K562 (cell line): ENCODE measurements at regions of chr14 and their contacts with region 1.

Region 1: DNA sequence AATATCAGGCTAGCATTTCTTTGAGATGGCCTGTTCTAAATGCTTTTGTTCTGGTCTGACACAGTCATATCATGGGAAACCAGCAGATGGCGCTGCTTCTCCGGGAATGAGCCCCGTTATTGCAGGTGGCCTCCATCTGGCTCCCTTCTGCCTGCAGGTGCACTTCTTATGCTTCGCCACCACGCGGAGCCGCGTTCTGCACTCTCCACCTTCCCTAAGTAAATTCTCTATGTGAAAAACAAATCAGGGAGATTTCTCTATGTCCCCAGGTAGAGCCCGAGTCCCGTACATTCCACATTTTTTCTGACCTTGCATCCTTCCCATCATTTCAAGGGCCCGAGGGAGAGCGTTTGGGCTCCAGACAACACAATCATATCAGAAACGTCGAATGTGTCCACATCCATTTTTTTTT is 26.2 kb downstream of the GLRX5 start:
- DNase-seq: peak; percentile 74 to 85 (median 80)
- ATAC-seq: peak; percentile 98
- H3K4me3 ChIP-seq: no peak overlapping the region
- H3K27ac ChIP-seq: no peak overlapping the region
- H3K4me1 ChIP-seq: no peaks in the 10 kb centered on the region; a peak in 1 of 5 replicates
- H3K27me3 ChIP-seq: 0 out of 5 replicates have a peak, but pooled peaks cover 0 to 12% of the 10 kb centered on the region in 2 experiments
- CTCF ChIP-seq: peak; percentile 97 to 98 (median 98)
- EP300 ChIP-seq: no peak
- POLR2A ChIP-seq: no peak
- RAD21 ChIP-seq: peak; percentile 81 to 94

Region 2: GRCh38 chr14:95527387-95528002 is 33.5 kb before region 1 on chr14:
- CTCF ChIA-PET with region 1: no interaction called
- POLR2A ChIA-PET with region 1: no interaction called
- in situ Hi-C with region 1: no loop called
- intact Hi-C with region 1: no loop called
- DNase-seq: peak in 1 of 4 experiments; percentile 51
- ATAC-seq: peak; percentile 25; the same call in 1 of the 3 replicates
- H3K4me3 ChIP-seq: no peak overlapping the region
- H3K27ac ChIP-seq: 0 out of 3 replicates have a peak overlapping the region, but pooled peaks have one; percentile 47
- H3K4me1 ChIP-seq: peaks cover 0 to 64% of the 10 kb centered on the region in 2 experiments; a peak in 3 of 5 replicates
- H3K27me3 ChIP-seq: no peaks in the 10 kb centered on the region
- CTCF ChIP-seq: peak; percentile 46 to 73 (median 62); a peak in 5 of 6 replicates
- EP300 ChIP-seq: no peak
- POLR2A ChIP-seq: no peak
- RAD21 ChIP-seq: peak; percentile 45 to 69

Region 3: DNA sequence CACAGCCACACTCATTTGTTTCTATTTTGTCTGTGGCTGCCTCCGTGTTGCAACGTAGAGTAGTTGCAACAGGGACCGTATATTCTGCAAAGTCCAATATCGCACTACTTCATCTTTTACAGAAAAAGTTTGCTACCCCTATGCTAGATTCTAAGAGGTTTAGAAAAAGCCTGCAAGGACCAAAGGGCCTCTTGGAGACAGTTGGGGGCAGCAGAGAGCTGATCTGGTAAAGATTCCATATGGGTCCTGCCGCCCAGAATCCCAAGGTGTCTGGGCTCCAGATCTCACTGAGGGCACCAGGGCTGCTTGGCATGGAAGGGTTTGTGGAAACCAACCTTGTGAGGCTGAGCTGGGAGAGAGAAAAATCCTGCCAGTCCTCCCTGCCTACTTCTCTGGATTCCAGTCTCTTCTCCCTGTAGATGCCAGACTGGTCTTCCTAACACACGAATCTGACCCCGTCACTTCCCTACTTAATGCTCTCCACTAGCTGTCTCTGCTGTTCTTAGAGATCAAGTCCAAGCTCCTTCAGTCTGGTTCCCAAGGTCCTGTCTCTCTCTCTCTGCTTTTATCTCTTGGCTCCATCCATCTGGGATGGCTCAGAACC is 48.5 kb after region 1 on chr14:
- CTCF ChIA-PET with region 1: interaction called, 5 read pairs
- POLR2A ChIA-PET with region 1: interaction called, 3 read pairs
- in situ Hi-C with region 1: no loop called
- intact Hi-C with region 1: loop called (anchors 5 kb)
- DNase-seq: peak; percentile 14 to 44 (median 18)
- ATAC-seq: peak; percentile 76
- H3K4me3 ChIP-seq: no peak overlapping the region
- H3K27ac ChIP-seq: no peak overlapping the region
- H3K4me1 ChIP-seq: no peaks in the 10 kb centered on the region
- H3K27me3 ChIP-seq: peaks cover 9 to 13% of the 10 kb centered on the region in 2 experiments; a peak in 4 of 5 replicates
- CTCF ChIP-seq: peak; percentile 47 to 68 (median 62)
- EP300 ChIP-seq: no peak
- POLR2A ChIP-seq: no peak
- RAD21 ChIP-seq: peak; percentile 41 to 61

Region 4: GRCh38 chr14:95774265-95775160 is 213.5 kb after region 1 on chr14:
- CTCF ChIA-PET with region 1: no interaction called
- POLR2A ChIA-PET with region 1: no interaction called
- in situ Hi-C with region 1: loop called (anchors 5 kb)
- intact Hi-C with region 1: loop called (anchors 1 kb)
- DNase-seq: peak; percentile 47 to 63 (median 58)
- ATAC-seq: peak; percentile 55; the same call in 2 of the 3 replicates
- H3K4me3 ChIP-seq: no peak overlapping the region
- H3K27ac ChIP-seq: no peak overlapping the region
- H3K4me1 ChIP-seq: no peaks in the 10 kb centered on the region; a peak in 1 of 5 replicates
- H3K27me3 ChIP-seq: no peaks in the 10 kb centered on the region
- CTCF ChIP-seq: peak; percentile 63 to 73 (median 69)
- EP300 ChIP-seq: no peak
- POLR2A ChIP-seq: no peak
- RAD21 ChIP-seq: peak; percentile 27 to 54; a peak in 3 of 4 replicates

Region 5: DNA sequence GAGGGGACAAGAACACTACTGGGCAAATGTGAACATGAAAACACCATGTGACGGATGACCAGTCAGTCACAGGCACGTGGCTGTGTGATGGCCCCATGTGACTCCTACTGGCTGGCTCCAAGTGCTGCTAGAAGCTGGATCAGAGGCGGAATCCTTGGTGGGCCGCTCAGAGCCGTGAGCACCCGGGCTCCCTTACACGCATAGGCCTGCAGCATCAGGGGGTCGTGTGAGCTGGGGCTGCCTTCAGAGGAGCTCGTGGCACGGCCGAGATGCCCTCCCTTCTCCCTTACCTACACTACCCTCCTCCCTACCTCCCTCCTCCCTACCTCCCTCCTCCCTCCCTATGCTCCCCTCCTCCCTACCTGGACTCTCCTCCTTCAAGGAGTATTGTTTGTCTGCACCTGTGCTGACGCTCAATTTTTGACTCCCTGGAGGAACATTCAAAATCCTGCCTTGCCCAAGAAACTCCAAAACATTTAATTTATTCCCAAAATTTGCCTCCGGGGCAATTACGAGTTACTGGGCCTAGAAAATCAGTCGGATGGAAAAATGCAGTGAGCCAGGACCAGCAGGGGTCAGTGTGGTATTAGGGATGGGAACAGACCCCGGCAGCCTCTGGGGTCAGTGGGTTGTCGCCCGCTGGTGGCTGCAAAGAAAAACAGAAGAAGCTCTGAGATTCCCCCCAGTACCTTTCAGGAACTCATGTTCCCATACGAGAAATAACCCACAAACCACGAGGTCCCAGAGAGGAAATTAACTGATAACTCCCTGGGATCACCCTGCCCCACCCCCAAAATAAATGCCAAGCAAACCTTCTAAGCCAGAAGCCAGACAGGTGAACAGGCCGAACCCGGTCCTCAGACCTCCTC is 539.4 kb after region 1 on chr14:
- CTCF ChIA-PET with region 1: no interaction called
- POLR2A ChIA-PET with region 1: no interaction called
- in situ Hi-C with region 1: no loop called
- intact Hi-C with region 1: loop called (anchors 1 kb)
- DNase-seq: peak; percentile 70 to 75 (median 75)
- ATAC-seq: peak; percentile 93
- H3K4me3 ChIP-seq: no peak overlapping the region
- H3K27ac ChIP-seq: no peak overlapping the region
- H3K4me1 ChIP-seq: peaks cover 0 to 3% of the 10 kb centered on the region in 2 experiments; a peak in 1 of 5 replicates
- H3K27me3 ChIP-seq: peaks cover 0 to 7% of the 10 kb centered on the region in 2 experiments; a peak in 1 of 5 replicates
- CTCF ChIP-seq: peak; percentile 89 to 99 (median 99)
- EP300 ChIP-seq: no peak
- POLR2A ChIP-seq: no peak
- RAD21 ChIP-seq: peak; percentile 87 to 89

Region 6: GRCh38 chr14:96275177-96276112 is 714.4 kb after region 1 on chr14:
- CTCF ChIA-PET with region 1: no interaction called
- POLR2A ChIA-PET with region 1: no interaction called
- in situ Hi-C with region 1: loop called (anchors 25 kb)
- intact Hi-C with region 1: loop called (anchors 10 kb)
- DNase-seq: peak; percentile 64 to 71 (median 69)
- ATAC-seq: peak; percentile 83
- H3K4me3 ChIP-seq: no peak overlapping the region
- H3K27ac ChIP-seq: no peak overlapping the region
- H3K4me1 ChIP-seq: no peaks in the 10 kb centered on the region
- H3K27me3 ChIP-seq: no peaks in the 10 kb centered on the region
- CTCF ChIP-seq: peak; percentile 78 to 87 (median 81)
- EP300 ChIP-seq: no peak
- POLR2A ChIP-seq: no peak
- RAD21 ChIP-seq: peak; percentile 75 to 79